HepG2 (cell line): ENCODE measurements at regions of chr19 and their contacts with region 1.

Region 1: DNA sequence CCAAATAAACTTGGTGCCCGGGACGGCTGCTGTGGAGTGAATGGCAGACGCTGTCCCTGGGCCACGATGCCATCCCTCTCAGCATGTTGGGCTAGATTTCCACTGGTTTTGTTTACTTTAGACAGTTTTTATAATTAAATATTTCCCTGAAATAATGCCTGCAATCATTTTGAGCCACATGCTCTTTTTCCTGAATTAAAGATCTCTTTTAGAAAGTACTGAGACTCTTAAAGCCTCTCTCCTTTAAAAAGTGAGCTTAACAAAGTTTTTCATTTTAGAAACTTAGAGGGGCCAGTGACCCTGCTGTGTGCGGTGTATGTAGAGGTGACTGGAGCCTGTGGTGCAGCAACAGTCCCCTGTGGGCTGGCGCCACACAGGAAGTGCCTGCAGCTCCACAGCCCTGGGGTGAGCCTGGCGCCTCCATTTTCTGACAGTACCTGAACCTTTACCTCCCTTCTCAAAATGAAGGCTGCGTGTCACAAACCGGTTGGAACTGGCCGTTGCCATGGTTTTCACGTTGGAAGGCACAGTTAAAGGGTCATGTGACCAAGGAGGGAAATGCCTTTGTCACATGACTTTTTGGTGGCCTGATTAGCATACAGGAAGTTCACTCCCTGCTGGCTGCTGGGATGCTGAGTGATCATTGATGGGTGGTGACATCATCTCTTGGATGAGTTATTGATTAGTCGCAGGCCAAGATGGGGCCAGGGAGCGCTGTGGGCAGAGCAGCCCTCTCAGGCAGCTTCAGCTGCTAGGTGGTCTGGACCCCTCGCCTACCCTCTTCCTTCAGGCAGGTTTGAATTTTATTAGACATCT is 26.3 kb downstream of the TSSK6 start:
- DNase-seq: peak; percentile 60
- ATAC-seq: peak; percentile 25
- H3K4me3 ChIP-seq: no peak overlapping the region
- H3K27ac ChIP-seq: peak overlapping the region; percentile 16
- H3K4me1 ChIP-seq: peaks cover 47% of the 10 kb centered on the region
- H3K27me3 ChIP-seq: no peaks in the 10 kb centered on the region; a peak in 1 of 5 replicates
- CTCF ChIP-seq: no peak
- EP300 ChIP-seq: no peak
- POLR2A ChIP-seq: no peak
- RAD21 ChIP-seq: no peak

Region 2: GRCh38 chr19:19366612-19367396 is 122.3 kb before region 1 on chr19:
- CTCF ChIA-PET with region 1: interaction called, 33 read pairs
- POLR2A ChIA-PET with region 1: interaction called, 19 read pairs
- in situ Hi-C with region 1: loop called (anchors 5 kb)
- intact Hi-C with region 1: loop called (anchors 1 kb)
- DNase-seq: peak; percentile 92
- ATAC-seq: peak; percentile 89
- H3K4me3 ChIP-seq: peak overlapping the region; percentile 34 to 67 (median 50)
- H3K27ac ChIP-seq: peak overlapping the region; percentile 54
- H3K4me1 ChIP-seq: peaks cover 52% of the 10 kb centered on the region
- H3K27me3 ChIP-seq: no peaks in the 10 kb centered on the region
- CTCF ChIP-seq: peak; percentile 100
- EP300 ChIP-seq: no peak
- POLR2A ChIP-seq: peak; percentile 20 to 52; a peak in 2 of 4 replicates
- RAD21 ChIP-seq: peak; percentile 95

Region 3: DNA sequence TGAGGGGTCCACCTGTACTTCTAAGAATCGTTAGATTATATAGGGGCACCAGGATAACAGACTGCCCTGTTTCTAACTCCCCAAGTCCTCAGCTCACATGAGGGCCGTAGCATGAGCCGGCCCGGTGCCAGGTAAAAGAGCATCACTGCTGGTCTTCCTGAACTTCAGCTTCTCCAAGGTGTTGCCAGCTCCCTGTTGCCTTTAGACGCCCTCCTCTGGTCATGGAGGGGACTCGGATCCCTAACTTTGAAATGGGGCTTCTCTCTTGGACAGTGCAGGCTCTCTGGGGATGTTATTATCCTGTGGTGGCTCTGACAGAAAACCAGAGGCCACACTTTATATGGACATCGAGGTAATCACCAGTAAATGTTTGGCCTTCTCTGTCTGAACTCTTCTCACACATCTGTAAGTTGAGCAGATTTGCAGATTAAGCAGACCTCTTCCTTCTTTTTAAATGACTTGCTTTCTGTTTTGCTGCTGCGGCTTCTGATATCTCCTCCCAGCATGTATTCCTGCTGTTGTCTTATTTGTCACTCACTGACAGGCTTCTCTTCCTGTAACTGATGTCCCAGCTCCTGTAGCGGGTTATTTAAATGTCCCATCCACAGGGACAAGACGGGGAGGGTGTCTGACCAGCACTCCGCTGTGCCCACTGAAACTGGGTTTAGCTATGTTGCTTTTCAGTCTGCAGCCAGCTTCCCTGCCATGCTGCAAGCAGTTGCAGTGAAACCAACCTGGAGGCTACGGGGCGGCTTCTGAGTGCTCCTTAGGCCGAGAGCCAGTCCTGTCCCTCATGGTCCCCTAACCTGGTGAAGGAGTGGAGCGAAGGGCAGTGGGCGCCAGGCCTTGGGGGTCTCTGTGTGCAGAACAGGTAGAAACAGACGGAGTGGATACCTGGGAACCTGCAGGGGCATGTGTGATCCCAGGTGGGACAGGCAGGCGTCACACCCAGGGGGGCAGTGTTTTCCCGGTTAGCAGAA is 12.9 kb before region 1 on chr19:
- CTCF ChIA-PET with region 1: no interaction called
- POLR2A ChIA-PET with region 1: no interaction called
- in situ Hi-C with region 1: no loop called
- intact Hi-C with region 1: no loop called
- DNase-seq: peak; percentile 16
- ATAC-seq: peak; percentile 71
- H3K4me3 ChIP-seq: no peak overlapping the region
- H3K27ac ChIP-seq: no peak overlapping the region
- H3K4me1 ChIP-seq: no peaks in the 10 kb centered on the region
- H3K27me3 ChIP-seq: no peaks in the 10 kb centered on the region
- CTCF ChIP-seq: peak; percentile 33; the same call in 1 of the 2 replicates
- EP300 ChIP-seq: no peak
- POLR2A ChIP-seq: no peak
- RAD21 ChIP-seq: no peak